ENCODE measurements at regions of chr20 and their contacts with region 1.

Region 1: GRCh38 chr20:39398656-39399055 is 436.5 kb downstream of the DHX35 start:
- DNase-seq: no peak
- ATAC-seq: no peak
- H3K4me3 Mint-ChIP-seq: no peak overlapping the region
- H3K27ac Mint-ChIP-seq: no peak overlapping the region
- H3K4me1 Mint-ChIP-seq: no peaks in the 10 kb centered on the region
- H3K27me3 Mint-ChIP-seq: peaks cover 10% of the 10 kb centered on the region

Region 2: GRCh38 chr20:41275301-41275731 is 1876.7 kb after region 1 on chr20:
- CTCF ChIA-PET with region 1: no interaction called
- POLR2A ChIA-PET with region 1: no interaction called
- intact Hi-C with region 1: loop called in 1 of 2 experiments (anchors 10 kb)
- DNase-seq: no peak
- ATAC-seq: no peak
- H3K4me3 Mint-ChIP-seq: no peak overlapping the region
- H3K27ac Mint-ChIP-seq: no peak overlapping the region
- H3K4me1 Mint-ChIP-seq: no peaks in the 10 kb centered on the region
- H3K27me3 Mint-ChIP-seq: no peaks in the 10 kb centered on the region

Measured in activated CD4-positive, alpha-beta T cell treated with anti-CD3 and anti-CD28 coated beads for 36 hours (primary cell).